Activated T-helper 1 cell treated with anti-CD3 and anti-CD28 coated beads, Interleukin-12 subunit alpha, Interleukin-12 subunit beta, Interleukin-2, Interleukin-4 antibody, amounts not matched to agents 30 ng/mL and 10 ng/mL and 1 ng/mL, durations not matched to agents 14 hours and 24 hours and 36 hours (primary cell): ENCODE measurements at regions of chr2 and their contacts with region 1.

Region 1: GRCh38 chr2:64214281-64215115 is 70.3 kb upstream of the PELI1 start:
- DNase-seq: peak; percentile 33
- H3K4me3 Mint-ChIP-seq: peak overlapping the region; percentile 58
- H3K27ac Mint-ChIP-seq: peak overlapping the region; percentile 98
- H3K4me1 Mint-ChIP-seq: peaks cover 66% of the 10 kb centered on the region
- H3K27me3 Mint-ChIP-seq: no peaks in the 10 kb centered on the region

Region 2: GRCh38 chr2:63841254-63842022 is 373.1 kb before region 1 on chr2 and contains the start of gene UGP2:
- intact Hi-C with region 1: loop called (anchors 2 kb)
- DNase-seq: peak; percentile 83
- H3K4me3 Mint-ChIP-seq: peak within 1 kb of the TSS; percentile 99
- H3K27ac Mint-ChIP-seq: peak within 1 kb of the TSS; percentile 99
- H3K4me1 Mint-ChIP-seq: peaks cover 47% of the 10 kb centered on the region
- H3K27me3 Mint-ChIP-seq: no peaks in the 10 kb centered on the region
- total RNA-seq, gene UGP2: 60.3 and 65.9 TPM in 2 replicates

Region 3: GRCh38 chr2:64114063-64114911 is 100.2 kb before region 1 on chr2:
- intact Hi-C with region 1: loop called (anchors 1 kb)
- DNase-seq: no peak
- H3K4me3 Mint-ChIP-seq: peak overlapping the region; percentile 17
- H3K27ac Mint-ChIP-seq: peak overlapping the region; percentile 59
- H3K4me1 Mint-ChIP-seq: peaks cover 73% of the 10 kb centered on the region
- H3K27me3 Mint-ChIP-seq: no peaks in the 10 kb centered on the region

Region 4: GRCh38 chr2:64192125-64192479 is 22.4 kb before region 1 on chr2:
- intact Hi-C with region 1: no loop called
- DNase-seq: no peak
- H3K4me3 Mint-ChIP-seq: no peak overlapping the region
- H3K27ac Mint-ChIP-seq: no peak overlapping the region
- H3K4me1 Mint-ChIP-seq: peaks cover 39% of the 10 kb centered on the region
- H3K27me3 Mint-ChIP-seq: peaks cover 9% of the 10 kb centered on the region

Region 5: DNA sequence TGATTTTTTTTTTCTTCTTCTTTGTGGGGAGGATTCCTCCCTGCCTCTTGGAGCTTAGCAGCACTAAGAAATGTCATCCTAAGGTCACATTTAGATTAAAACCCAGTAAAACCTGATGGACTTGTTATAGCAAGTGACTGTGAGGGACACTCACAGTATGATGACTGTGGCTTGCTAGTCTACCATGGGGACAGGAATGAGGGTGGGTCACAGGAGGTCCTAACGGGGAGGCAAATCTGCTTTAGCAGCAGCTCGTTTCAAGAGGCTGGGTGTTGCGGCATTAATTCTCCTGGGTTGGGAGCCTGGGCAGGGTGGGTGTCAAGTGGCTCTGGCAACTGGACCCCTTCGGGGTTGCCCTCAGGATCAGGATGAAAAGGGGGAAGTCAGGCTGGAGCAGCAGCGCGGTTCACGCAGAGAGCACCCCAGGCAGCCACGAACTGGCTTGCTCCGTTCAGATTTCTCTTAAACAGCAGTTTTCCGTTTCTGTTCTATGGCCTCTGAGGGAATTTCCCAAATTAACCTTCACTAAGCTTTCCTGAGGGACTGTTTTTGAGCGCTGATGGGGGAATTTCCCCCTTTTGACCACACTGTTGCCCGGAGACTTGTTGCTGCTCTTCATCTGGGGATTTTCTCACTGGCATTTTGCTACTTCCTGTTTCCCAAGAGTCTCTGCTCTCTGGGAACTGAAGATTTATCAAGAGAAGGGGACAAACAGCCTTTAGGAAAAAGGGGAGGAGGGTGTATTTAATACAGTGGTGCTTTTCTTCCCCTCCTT is 10.5 kb before region 1 on chr2:
- intact Hi-C with region 1: loop called (anchors 1 kb)
- DNase-seq: peak; percentile 49
- H3K4me3 Mint-ChIP-seq: peak overlapping the region; percentile 76
- H3K27ac Mint-ChIP-seq: peak overlapping the region; percentile 91
- H3K4me1 Mint-ChIP-seq: peaks cover 84% of the 10 kb centered on the region
- H3K27me3 Mint-ChIP-seq: no peaks in the 10 kb centered on the region

Region 6: GRCh38 chr2:64318476-64318748 is 103.9 kb after region 1 on chr2:
- intact Hi-C with region 1: no loop called
- DNase-seq: no peak
- H3K4me3 Mint-ChIP-seq: no peak overlapping the region
- H3K27ac Mint-ChIP-seq: no peak overlapping the region
- H3K4me1 Mint-ChIP-seq: peaks cover 19% of the 10 kb centered on the region
- H3K27me3 Mint-ChIP-seq: peaks cover 30% of the 10 kb centered on the region

Region 7: GRCh38 chr2:64331849-64332699 is 117.6 kb after region 1 on chr2:
- intact Hi-C with region 1: no loop called
- DNase-seq: no peak
- H3K4me3 Mint-ChIP-seq: no peak overlapping the region
- H3K27ac Mint-ChIP-seq: no peak overlapping the region
- H3K4me1 Mint-ChIP-seq: peaks cover 45% of the 10 kb centered on the region
- H3K27me3 Mint-ChIP-seq: peaks cover 14% of the 10 kb centered on the region

Region 8: GRCh38 chr2:64482765-64483504 is 268.4 kb after region 1 on chr2:
- intact Hi-C with region 1: no loop called
- DNase-seq: no peak
- H3K4me3 Mint-ChIP-seq: no peak overlapping the region
- H3K27ac Mint-ChIP-seq: no peak overlapping the region
- H3K4me1 Mint-ChIP-seq: peaks cover 20% of the 10 kb centered on the region
- H3K27me3 Mint-ChIP-seq: peaks cover 11% of the 10 kb centered on the region

Region 9: DNA sequence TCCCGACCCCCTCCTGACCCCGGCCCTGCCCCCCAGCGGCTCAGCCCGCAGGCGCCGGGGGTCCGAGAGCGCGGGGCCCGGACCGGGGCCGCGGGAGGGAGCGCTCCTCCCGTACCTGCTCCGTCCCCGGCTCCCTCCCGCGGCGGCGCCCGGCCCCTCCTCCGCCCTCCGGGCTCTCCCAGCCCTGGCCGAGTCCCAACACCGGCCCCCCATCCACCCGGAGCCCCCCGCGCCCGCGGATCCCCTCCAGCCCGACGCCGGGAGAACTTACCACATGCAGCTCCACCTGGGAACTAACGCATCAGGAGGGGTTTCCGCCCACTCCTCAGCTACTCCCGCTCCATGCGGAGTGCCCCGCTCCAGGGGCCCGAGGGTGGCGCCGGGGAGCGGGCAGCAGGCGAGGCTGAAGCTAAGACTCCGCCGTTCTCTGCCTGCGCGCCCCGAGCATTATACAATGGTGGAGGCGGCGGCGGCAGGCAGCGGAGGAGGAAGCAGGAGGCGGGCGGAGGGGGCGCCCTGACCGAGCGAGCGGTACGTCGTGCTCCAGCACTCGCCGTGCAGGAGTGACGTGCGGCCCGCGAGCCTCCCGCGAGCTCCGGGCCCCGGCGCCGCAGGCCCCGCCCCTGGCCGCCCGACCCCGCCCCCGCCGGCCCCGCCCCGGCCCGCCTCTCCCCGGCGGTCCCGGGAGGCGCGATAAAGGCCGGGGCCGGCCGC is 439.0 kb after region 1 on chr2 and contains the start of gene SERTAD2:
- intact Hi-C with region 1: loop called (anchors 1 kb)
- DNase-seq: peak; percentile 83
- H3K4me3 Mint-ChIP-seq: peak within 1 kb of the TSS; percentile 90
- H3K27ac Mint-ChIP-seq: peak within 1 kb of the TSS; percentile 90
- H3K4me1 Mint-ChIP-seq: peaks cover 71% of the 10 kb centered on the region
- H3K27me3 Mint-ChIP-seq: no peaks in the 10 kb centered on the region
- total RNA-seq, gene SERTAD2: 27.3 and 28.5 TPM in 2 replicates

Region 10: GRCh38 chr2:64988420-64989125 is 774.1 kb after region 1 on chr2:
- intact Hi-C with region 1: loop called (anchors 10 kb)
- DNase-seq: peak; percentile 75
- H3K4me3 Mint-ChIP-seq: peak overlapping the region; percentile 88
- H3K27ac Mint-ChIP-seq: peak overlapping the region; percentile 92
- H3K4me1 Mint-ChIP-seq: peaks cover 79% of the 10 kb centered on the region
- H3K27me3 Mint-ChIP-seq: peaks cover 11% of the 10 kb centered on the region